Naive thymus-derived CD4-positive, alpha-beta T cell (primary cell): ENCODE measurements at regions of chr14 and their contacts with region 1.

Region 1: DNA sequence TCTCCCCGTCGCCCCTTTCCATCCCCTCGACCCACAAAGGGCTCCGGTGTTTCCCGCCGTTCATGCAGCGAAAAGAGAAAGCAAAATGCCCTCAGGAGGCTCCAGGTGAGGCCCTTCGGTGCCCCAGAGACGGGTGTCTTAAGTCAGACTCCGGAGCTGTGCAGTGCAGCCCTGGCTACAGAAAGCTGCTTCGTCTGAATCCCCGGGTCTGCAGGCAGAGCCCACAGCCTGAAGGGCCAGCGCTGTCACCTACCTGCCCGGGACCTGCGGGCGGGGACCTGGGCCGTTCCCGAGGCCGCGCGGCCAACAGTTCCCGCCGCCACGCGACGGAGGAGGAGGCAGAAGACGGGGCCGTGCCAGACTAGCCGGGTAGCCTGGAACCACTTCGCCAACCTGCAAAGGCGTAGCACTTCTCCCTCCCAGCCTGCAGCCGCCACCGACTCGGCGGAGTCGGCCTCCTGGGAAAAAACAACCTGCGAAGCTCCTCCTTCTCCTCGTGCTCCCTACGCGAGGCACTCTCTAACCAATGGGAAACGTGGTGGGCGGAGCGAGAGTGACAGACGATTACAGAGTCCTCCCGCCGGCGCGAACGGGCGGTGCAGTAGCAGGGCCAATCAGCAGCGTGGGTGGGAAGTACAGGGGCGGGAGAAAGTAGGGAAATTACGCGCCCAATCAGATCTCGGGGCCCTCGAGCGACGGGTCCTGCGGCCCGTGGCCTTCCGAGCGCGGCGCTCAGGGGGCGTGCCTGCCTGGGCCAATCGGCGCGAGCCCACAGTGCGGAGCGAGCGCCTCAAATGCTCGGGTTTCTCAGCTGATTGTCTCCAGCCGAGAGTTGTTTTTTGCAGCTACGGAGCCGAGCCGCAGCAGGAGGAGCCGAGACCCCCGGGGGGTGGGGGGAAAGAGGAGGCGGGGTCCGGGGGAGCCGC is at the starts of genes GPR137C and TXNDC16:
- DNase-seq: peak; percentile 92 to 100 (median 98)
- ATAC-seq: peak; percentile 93
- H3K4me3 ChIP-seq: peak within 1 kb of the TSS; percentile 87
- H3K4me3 Mint-ChIP-seq: peak within 1 kb of the TSS; percentile 91 to 97 (median 96)
- H3K27ac ChIP-seq: peak within 1 kb of the TSS; percentile 90
- H3K27ac Mint-ChIP-seq: peak within 1 kb of the TSS; percentile 82 to 97 (median 94)
- H3K4me1 ChIP-seq: peaks cover 9 to 15% of the 10 kb centered on the region in 2 donors
- H3K4me1 Mint-ChIP-seq: peaks cover 6 to 40% (median 28%) of the 10 kb centered on the region in 7 donors
- H3K27me3 ChIP-seq: no peaks in the 10 kb centered on the region
- H3K27me3 Mint-ChIP-seq: peaks cover 0 to 26% (median 0%) of the 10 kb centered on the region in 5 donors
- total RNA-seq, gene GPR137C: 0.27 to 0.70 (median 0.34) TPM in 3 of 5 experiments, not detected in the others
- total RNA-seq, gene TXNDC16: 6.9 to 15.8 (median 9.1) TPM

Region 2: DNA sequence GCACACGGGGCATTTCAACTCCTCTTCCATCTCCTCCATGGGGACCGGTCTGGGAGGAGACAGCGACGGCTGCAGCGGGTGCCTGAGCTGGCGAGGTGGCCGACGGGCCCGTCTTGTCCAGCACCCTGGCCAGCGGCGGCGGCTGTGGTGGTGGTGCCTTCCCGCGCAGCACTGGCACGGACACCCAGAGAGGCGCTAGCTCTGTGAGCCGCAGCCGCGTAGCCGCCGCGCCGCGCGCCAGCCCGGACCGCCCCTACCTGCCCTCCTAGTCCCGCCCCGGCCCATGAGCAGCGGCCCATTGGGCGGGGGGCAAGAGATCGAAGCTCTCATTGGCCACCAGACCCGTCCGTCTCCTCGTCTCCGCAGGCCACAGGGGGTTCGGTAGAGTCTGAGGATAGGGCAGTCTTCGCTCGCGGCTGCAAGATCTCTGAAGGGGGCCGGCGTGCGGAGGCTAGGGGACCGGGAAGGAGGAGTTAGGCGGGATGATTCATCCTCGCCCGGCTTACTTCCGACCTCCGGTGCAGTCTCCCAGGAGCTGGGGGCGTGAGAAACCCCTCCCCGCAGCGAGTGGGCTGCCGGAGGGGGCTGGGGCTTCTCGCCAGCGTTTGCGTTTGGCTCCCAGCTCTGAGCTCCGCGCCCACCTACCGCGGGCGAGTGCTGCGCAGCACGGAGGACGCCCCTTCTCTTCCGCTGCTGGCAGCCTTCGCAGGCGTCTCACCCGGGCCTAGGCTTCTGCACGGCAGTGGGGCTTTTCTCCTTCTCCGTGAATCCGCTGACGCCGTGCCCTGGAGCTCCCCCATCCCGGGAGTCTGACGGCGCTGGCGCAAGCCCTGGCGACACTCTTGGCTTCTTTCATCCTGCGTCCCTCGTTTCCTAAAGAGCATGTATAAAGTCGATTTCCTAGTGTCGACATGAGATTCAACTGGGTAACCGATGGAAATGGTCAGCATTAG is 1457.1 kb before region 1 on chr14 and contains the start of gene TRIM9:
- CTCF ChIA-PET with region 1: no interaction called
- POLR2A ChIA-PET with region 1: no interaction called
- intact Hi-C with region 1: loop called (anchors 2 to 5 kb)
- DNase-seq: peak; percentile 77 to 93 (median 91)
- ATAC-seq: peak; percentile 96
- H3K4me3 ChIP-seq: peak within 1 kb of the TSS; percentile 83
- H3K4me3 Mint-ChIP-seq: peak within 1 kb of the TSS; percentile 89 to 98 (median 95)
- H3K27ac ChIP-seq: peak within 1 kb of the TSS; percentile 58
- H3K27ac Mint-ChIP-seq: peak within 1 kb of the TSS; percentile 9 to 93 (median 87)
- H3K4me1 ChIP-seq: peaks cover 3 to 8% of the 10 kb centered on the region in 2 donors
- H3K4me1 Mint-ChIP-seq: peaks cover 4 to 18% (median 9%) of the 10 kb centered on the region in 7 donors
- H3K27me3 ChIP-seq: peaks cover 0 to 3% of the 10 kb centered on the region in 2 donors
- H3K27me3 Mint-ChIP-seq: peaks cover 12 to 70% (median 17%) of the 10 kb centered on the region in 5 donors
- total RNA-seq, gene TRIM9: 0.27 to 1.7 (median 0.39) TPM

Region 3: DNA sequence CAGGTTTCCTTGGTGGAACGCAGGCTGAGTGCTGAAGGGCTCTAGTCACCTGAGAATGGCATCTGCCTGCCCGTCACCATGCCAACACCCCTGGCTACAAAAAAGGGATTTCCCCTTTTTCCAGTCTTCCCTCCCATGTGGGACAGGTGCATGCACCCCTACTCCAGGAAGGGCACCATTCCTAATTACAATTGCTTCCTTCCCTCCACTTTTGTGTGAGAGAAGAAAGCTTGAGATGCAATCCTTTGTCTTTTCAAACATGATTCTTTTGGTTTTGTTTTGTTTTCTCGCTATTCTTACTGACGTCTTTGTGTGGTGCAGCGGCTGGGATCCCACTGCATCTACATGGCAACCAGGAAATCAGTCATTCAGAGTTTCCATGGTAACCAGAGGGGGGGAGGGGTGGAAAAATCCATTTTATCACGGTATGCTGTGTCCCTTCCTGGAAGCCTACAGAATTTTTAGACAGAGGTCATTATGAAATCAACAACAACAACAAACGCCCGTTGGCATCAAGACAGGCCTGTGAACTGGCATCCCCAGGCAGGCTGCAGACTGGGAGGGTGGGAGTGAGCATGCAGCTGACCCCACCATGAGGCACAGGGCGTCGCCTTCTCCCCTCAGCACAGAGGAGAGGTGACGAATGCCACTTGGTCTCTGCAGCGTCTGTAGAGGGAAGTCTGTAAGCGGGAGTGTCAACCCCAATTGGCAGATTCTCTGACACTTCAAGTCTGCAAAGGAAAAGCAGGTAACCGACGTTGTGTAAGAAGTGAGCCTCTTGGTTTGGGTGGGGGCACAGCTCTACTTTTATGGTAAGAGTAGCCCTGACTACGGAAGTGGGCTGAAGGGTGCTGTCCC is 705.5 kb before region 1 on chr14:
- CTCF ChIA-PET with region 1: no interaction called
- POLR2A ChIA-PET with region 1: no interaction called
- intact Hi-C with region 1: loop called (anchors 1 to 2 kb)
- DNase-seq: peak; percentile 69 to 98 (median 94)
- ATAC-seq: peak; percentile 87
- H3K4me3 ChIP-seq: peak overlapping the region; percentile 63
- H3K4me3 Mint-ChIP-seq: peak overlapping the region; percentile 55 to 96 (median 88)
- H3K27ac ChIP-seq: peak overlapping the region; percentile 96
- H3K27ac Mint-ChIP-seq: peak overlapping the region; percentile 97 to 100 (median 99)
- H3K4me1 ChIP-seq: peaks cover 23 to 43% of the 10 kb centered on the region in 2 donors
- H3K4me1 Mint-ChIP-seq: peaks cover 29 to 83% (median 74%) of the 10 kb centered on the region in 7 donors
- H3K27me3 ChIP-seq: no peaks in the 10 kb centered on the region
- H3K27me3 Mint-ChIP-seq: peaks cover 0 to 2% (median 0%) of the 10 kb centered on the region in 5 donors

Region 4: DNA sequence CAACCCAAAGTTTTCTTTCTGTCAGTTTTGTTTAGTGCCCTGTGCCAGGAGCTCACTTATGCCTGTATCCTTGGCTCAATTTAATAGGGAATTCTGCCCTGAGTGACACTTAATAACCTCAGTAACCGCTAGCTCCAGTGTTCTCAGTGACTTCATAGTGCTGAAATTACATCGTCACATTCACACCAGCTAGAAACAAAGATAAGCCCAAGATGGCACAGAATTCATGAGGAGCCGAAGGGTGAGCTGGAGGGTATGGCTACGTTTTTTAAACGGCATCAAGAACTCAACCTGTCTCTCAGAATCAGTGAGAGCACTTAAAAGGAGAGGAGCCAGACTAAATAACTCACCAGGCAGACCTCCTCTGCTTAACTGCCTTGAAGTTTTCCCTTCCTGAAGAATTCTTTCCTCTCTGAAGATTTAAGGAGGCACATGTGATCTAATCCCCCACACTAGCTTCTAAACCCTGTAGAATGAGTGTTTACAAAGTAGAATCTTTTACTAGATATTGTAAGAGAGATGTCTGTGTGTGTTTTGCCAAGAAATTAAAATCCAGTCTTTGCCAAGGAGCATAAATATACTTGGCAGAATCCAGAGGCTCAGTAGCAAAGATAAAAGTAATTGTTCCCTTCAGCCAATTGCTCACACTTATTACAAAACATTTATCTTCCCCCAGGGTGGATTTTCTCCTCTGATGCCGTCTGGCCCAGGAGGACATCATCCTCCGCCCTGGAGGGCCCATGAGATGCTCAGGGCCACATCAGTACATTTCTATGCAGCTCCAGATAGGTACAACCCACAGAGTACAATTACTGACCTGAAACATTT is 200.9 kb before region 1 on chr14:
- CTCF ChIA-PET with region 1: no interaction called
- POLR2A ChIA-PET with region 1: no interaction called
- intact Hi-C with region 1: loop called (anchors 1 kb)
- DNase-seq: peak in 2 of 9 donors; percentile 2 to 10
- ATAC-seq: peak; percentile 54
- H3K4me3 ChIP-seq: peak overlapping the region; percentile 18
- H3K4me3 Mint-ChIP-seq: peak overlapping the region; percentile 48 to 94 (median 76)
- H3K27ac ChIP-seq: peak overlapping the region; percentile 59
- H3K27ac Mint-ChIP-seq: peak overlapping the region; percentile 81 to 100 (median 88)
- H3K4me1 ChIP-seq: peaks cover 46 to 53% of the 10 kb centered on the region in 2 donors
- H3K4me1 Mint-ChIP-seq: peaks cover 36 to 76% (median 62%) of the 10 kb centered on the region in 7 donors
- H3K27me3 ChIP-seq: no peaks in the 10 kb centered on the region
- H3K27me3 Mint-ChIP-seq: peaks cover 0 to 4% (median 0%) of the 10 kb centered on the region in 5 donors

Region 5: DNA sequence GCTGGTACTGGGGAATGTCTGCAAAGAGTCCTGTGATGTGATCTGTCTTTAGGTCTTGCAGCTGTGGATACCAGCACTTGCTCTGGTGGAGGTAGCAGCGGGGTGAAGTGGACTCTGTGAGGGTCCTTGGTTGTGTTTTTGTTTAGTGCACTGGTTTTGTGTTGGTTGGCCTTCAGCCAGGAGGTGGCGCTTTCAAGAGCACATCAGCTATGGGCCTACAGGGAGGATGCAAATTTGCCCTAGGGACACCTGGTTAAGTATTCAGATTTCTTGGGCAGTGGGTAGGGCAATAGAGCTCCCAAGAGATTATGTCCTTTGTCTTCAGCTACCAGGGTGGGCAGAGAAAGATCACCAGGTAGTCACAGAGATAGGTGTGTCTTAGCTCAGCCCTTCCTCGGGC is 174.4 kb before region 1 on chr14:
- CTCF ChIA-PET with region 1: no interaction called
- POLR2A ChIA-PET with region 1: no interaction called
- intact Hi-C with region 1: no loop called
- DNase-seq: no peak
- ATAC-seq: no peak
- H3K4me3 ChIP-seq: no peak overlapping the region
- H3K4me3 Mint-ChIP-seq: no peak overlapping the region
- H3K27ac ChIP-seq: no peak overlapping the region
- H3K27ac Mint-ChIP-seq: no peak overlapping the region
- H3K4me1 ChIP-seq: no peaks in the 10 kb centered on the region
- H3K4me1 Mint-ChIP-seq: peaks cover 0 to 16% (median 0%) of the 10 kb centered on the region in 7 donors
- H3K27me3 ChIP-seq: no peaks in the 10 kb centered on the region
- H3K27me3 Mint-ChIP-seq: peaks cover 0 to 9% (median 0%) of the 10 kb centered on the region in 5 donors

Region 6: DNA sequence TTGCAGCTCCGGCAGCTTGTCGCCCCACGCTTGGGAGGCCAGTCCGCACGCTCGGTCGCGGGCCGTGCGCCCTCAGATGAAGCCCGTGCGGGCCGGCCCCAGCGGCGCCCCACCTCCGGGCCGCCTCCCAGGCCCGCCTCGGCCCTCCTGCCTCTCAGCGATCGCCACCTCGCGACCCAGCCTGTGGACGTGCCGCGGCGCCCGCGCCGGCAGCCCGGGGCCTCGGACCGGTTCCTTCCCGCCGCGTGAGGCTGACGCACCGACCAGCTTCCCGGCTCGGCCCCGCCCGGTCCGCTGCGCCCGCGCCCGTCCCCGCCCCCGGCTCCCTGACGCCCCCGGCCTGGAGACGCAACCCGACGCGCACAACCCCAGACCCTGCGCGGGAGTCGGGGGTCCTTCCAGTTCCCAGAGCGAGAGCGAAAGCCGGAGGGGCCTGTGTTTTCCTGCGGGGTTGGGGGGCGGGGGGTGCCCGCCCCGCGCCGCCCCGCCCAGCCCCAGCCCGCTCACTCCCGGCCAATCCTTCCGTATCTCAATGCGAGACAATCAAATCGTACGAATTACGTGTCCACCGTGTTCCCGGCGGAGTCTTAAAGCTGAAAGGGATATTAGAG is 143.3 kb after region 1 on chr14 and contains the start of gene ERO1A:
- CTCF ChIA-PET with region 1: no interaction called
- POLR2A ChIA-PET with region 1: interaction called, 6 read pairs
- intact Hi-C with region 1: loop called (anchors 1 kb)
- DNase-seq: peak; percentile 26 to 83 (median 53)
- ATAC-seq: peak; percentile 82
- H3K4me3 ChIP-seq: peak within 1 kb of the TSS; percentile 79
- H3K4me3 Mint-ChIP-seq: peak within 1 kb of the TSS; percentile 95 to 99 (median 99)
- H3K27ac ChIP-seq: peak within 1 kb of the TSS; percentile 85
- H3K27ac Mint-ChIP-seq: peak within 1 kb of the TSS; percentile 94 to 99 (median 98)
- H3K4me1 ChIP-seq: peaks cover 26 to 27% of the 10 kb centered on the region in 2 donors
- H3K4me1 Mint-ChIP-seq: peaks cover 32 to 47% (median 42%) of the 10 kb centered on the region in 7 donors
- H3K27me3 ChIP-seq: no peaks in the 10 kb centered on the region
- H3K27me3 Mint-ChIP-seq: no peaks in the 10 kb centered on the region
- total RNA-seq, gene ERO1A: 65.3 to 201 (median 68.7) TPM

Region 7: DNA sequence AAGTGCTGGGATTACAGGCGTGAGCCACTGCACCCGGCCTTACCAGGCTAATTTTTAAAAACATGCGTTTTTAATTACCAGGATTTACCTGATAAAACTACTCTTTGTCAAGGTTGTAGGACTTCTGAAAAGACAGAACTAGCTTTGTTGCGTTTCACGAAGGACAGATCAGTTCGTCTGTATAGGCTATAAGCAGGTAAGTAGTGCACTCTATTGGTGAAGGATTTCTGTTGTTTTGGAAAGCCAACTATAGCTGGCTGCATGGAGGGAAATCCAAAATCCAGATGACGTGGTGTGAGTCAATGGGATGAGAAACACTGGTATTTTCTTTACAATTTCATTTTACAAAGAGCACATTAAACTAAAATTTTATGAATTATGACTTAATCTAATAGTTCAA is 224.5 kb after region 1 on chr14:
- CTCF ChIA-PET with region 1: interaction called, 3 read pairs
- POLR2A ChIA-PET with region 1: interaction called, 3 read pairs
- intact Hi-C with region 1: loop called in 1 of 2 experiments (anchors 5 kb)
- DNase-seq: peak in 3 of 9 donors; percentile 35 to 39 (median 36)
- ATAC-seq: no peak
- H3K4me3 ChIP-seq: no peak overlapping the region
- H3K4me3 Mint-ChIP-seq: no peak overlapping the region
- H3K27ac ChIP-seq: no peak overlapping the region
- H3K27ac Mint-ChIP-seq: peak overlapping the region in 4 of 9 donors; percentile 13 to 59 (median 30)
- H3K4me1 ChIP-seq: no peaks in the 10 kb centered on the region
- H3K4me1 Mint-ChIP-seq: peaks cover 0 to 11% (median 0%) of the 10 kb centered on the region in 7 donors
- H3K27me3 ChIP-seq: no peaks in the 10 kb centered on the region
- H3K27me3 Mint-ChIP-seq: no peaks in the 10 kb centered on the region

Region 8: GRCh38 chr14:53109105-53110041 is 557.0 kb after region 1 on chr14:
- CTCF ChIA-PET with region 1: no interaction called
- POLR2A ChIA-PET with region 1: no interaction called
- intact Hi-C with region 1: loop called (anchors 5 kb)
- DNase-seq: peak in 8 of 9 donors; percentile 37 to 62 (median 57)
- ATAC-seq: peak; percentile 85
- H3K4me3 ChIP-seq: peak overlapping the region; percentile 70
- H3K4me3 Mint-ChIP-seq: no peak overlapping the region
- H3K27ac ChIP-seq: peak overlapping the region; percentile 67
- H3K27ac Mint-ChIP-seq: no peak overlapping the region
- H3K4me1 ChIP-seq: peaks cover 28 to 29% of the 10 kb centered on the region in 2 donors
- H3K4me1 Mint-ChIP-seq: peaks cover 10 to 46% (median 16%) of the 10 kb centered on the region in 7 donors
- H3K27me3 ChIP-seq: no peaks in the 10 kb centered on the region
- H3K27me3 Mint-ChIP-seq: no peaks in the 10 kb centered on the region